ENCODE measurements at regions of chr20 and their contacts with region 1.

Region 1: GRCh38 chr20:3767427-3768341 is at the start of gene ADISSP:
- DNase-seq: peak; percentile 99
- ATAC-seq: peak; percentile 79
- H3K4me3 ChIP-seq: peak within 1 kb of the TSS; percentile 98
- H3K27ac ChIP-seq: peak within 1 kb of the TSS; percentile 41
- H3K4me1 ChIP-seq: peaks cover 38% of the 10 kb centered on the region
- H3K27me3 ChIP-seq: no peaks in the 10 kb centered on the region
- CTCF ChIP-seq: no peak
- total RNA-seq, gene ADISSP: 244 and 307 TPM in 2 replicates

Region 2: GRCh38 chr20:3679749-3680700 is 87.7 kb before region 1 on chr20:
- CTCF ChIA-PET with region 1: interaction called, 5 read pairs
- POLR2A ChIA-PET with region 1: no interaction called
- intact Hi-C with region 1: loop called (anchors 5 kb)
- DNase-seq: no peak
- ATAC-seq: no peak
- H3K4me3 ChIP-seq: no peak overlapping the region
- H3K27ac ChIP-seq: no peak overlapping the region
- H3K4me1 ChIP-seq: peaks cover 3% of the 10 kb centered on the region; the same call in 1 of the 2 replicates
- H3K27me3 ChIP-seq: peaks cover 24% of the 10 kb centered on the region
- CTCF ChIP-seq: no peak

Region 3: GRCh38 chr20:3721912-3722311 is 45.8 kb before region 1 on chr20:
- CTCF ChIA-PET with region 1: interaction called, 4 read pairs
- POLR2A ChIA-PET with region 1: no interaction called
- intact Hi-C with region 1: loop called (anchors 5 kb)
- DNase-seq: no peak
- ATAC-seq: no peak
- H3K4me3 ChIP-seq: no peak overlapping the region
- H3K27ac ChIP-seq: no peak overlapping the region
- H3K4me1 ChIP-seq: no peaks in the 10 kb centered on the region
- H3K27me3 ChIP-seq: peaks cover 8% of the 10 kb centered on the region; the same call in 1 of the 2 replicates
- CTCF ChIP-seq: no peak

Region 4: GRCh38 chr20:3781153-3781910 is 13.6 kb after region 1 on chr20 and contains the start of gene SPEF1:
- CTCF ChIA-PET with region 1: interaction called, 18 read pairs
- POLR2A ChIA-PET with region 1: interaction called, 10 read pairs
- intact Hi-C with region 1: no loop called
- DNase-seq: peak; percentile 98
- ATAC-seq: peak; percentile 78
- H3K4me3 ChIP-seq: peak within 1 kb of the TSS; percentile 73
- H3K27ac ChIP-seq: no peak within 1 kb of the TSS
- H3K4me1 ChIP-seq: peaks cover 32% of the 10 kb centered on the region
- H3K27me3 ChIP-seq: no peaks in the 10 kb centered on the region
- CTCF ChIP-seq: peak; percentile 91
- total RNA-seq, gene SPEF1: 2.0 and 2.6 TPM in 2 replicates

Region 5: GRCh38 chr20:3825526-3825925 is 57.8 kb after region 1 on chr20:
- CTCF ChIA-PET with region 1: no interaction called
- POLR2A ChIA-PET with region 1: interaction called, 10 read pairs
- intact Hi-C with region 1: no loop called
- DNase-seq: no peak
- ATAC-seq: no peak
- H3K4me3 ChIP-seq: no peak overlapping the region
- H3K27ac ChIP-seq: no peak overlapping the region
- H3K4me1 ChIP-seq: peaks cover 10% of the 10 kb centered on the region
- H3K27me3 ChIP-seq: no peaks in the 10 kb centered on the region
- CTCF ChIP-seq: 0 out of 2 replicates have a peak, but pooled peaks have one; percentile 20